Activated CD4-positive, alpha-beta memory T cell treated with anti-CD3 and anti-CD28 coated beads for 36 hours (primary cell): ENCODE measurements at regions of chr7 and their contacts with region 1.

Region 1: GRCh38 chr7:105934572-105935185 is 28.4 kb upstream of the CDHR3 start:
- DNase-seq: no peak
- H3K4me3 Mint-ChIP-seq: no peak overlapping the region
- H3K27ac Mint-ChIP-seq: no peak overlapping the region
- H3K4me1 Mint-ChIP-seq: peaks cover 9% of the 10 kb centered on the region
- H3K27me3 Mint-ChIP-seq: no peaks in the 10 kb centered on the region

Region 2: GRCh38 chr7:105906695-105907094 is 28.0 kb before region 1 on chr7:
- CTCF ChIA-PET with region 1: no interaction called
- POLR2A ChIA-PET with region 1: no interaction called
- intact Hi-C with region 1: no loop called
- DNase-seq: no peak
- H3K4me3 Mint-ChIP-seq: no peak overlapping the region
- H3K27ac Mint-ChIP-seq: no peak overlapping the region
- H3K4me1 Mint-ChIP-seq: no peaks in the 10 kb centered on the region
- H3K27me3 Mint-ChIP-seq: no peaks in the 10 kb centered on the region

Region 3: GRCh38 chr7:106041140-106041717 is 106.5 kb after region 1 on chr7:
- CTCF ChIA-PET with region 1: no interaction called
- POLR2A ChIA-PET with region 1: no interaction called
- intact Hi-C with region 1: loop called (anchors 2 kb)
- DNase-seq: peak; percentile 52
- H3K4me3 Mint-ChIP-seq: no peak overlapping the region
- H3K27ac Mint-ChIP-seq: no peak overlapping the region
- H3K4me1 Mint-ChIP-seq: peaks cover 23% of the 10 kb centered on the region
- H3K27me3 Mint-ChIP-seq: peaks cover 2% of the 10 kb centered on the region